GM12878 (cell line): ENCODE measurements at regions of chr10 and their contacts with region 1.

Region 1: GRCh38 chr10:22988581-22989360 is 60.9 kb downstream of the ARMC3 start:
- DNase-seq: peak; percentile 44
- ATAC-seq: peak; percentile 75
- H3K4me3 ChIP-seq: no peak overlapping the region
- H3K27ac ChIP-seq: no peak overlapping the region
- H3K4me1 ChIP-seq: no peaks in the 10 kb centered on the region
- H3K27me3 ChIP-seq: no peaks in the 10 kb centered on the region
- CTCF ChIP-seq: peak; percentile 81 to 87 (median 86)
- EP300 ChIP-seq: no peak
- POLR2A ChIP-seq: no peak
- RAD21 ChIP-seq: peak; percentile 99

Region 2: DNA sequence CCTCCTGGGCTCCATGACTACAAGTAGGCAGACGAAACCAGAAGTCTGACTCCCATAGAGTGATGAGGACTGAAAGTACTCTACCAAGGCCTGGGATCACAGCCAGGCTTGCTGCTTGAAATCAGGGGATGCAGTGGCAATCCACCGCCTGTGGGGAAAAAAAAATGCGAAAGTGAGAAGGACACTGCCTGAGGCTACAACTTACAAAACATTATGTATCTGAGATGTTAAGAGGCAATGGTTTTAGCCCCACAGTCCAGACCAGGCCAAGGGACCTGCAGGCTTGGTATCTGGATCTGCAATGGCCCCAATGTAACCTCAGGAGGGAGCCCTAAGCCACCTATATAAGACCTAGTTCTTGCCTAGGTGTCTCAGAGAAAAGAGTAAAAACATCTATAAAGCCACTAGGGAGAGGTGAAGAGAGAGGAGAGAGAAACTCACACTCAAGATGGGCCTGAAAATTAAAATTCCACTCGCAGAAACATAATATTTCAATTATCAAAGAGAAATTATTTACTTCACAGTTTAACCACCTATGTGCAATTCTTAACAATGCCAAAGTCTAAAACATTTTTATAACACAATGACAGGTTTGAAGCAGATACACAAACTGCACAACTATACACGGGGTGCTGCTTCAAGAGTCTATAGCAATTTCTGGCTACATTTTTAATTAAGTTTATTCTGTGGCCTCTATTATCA is 999.2 kb before region 1 on chr10:
- CTCF ChIA-PET with region 1: interaction called, 72 read pairs
- POLR2A ChIA-PET with region 1: no interaction called
- RAD21 ChIA-PET with region 1: interaction called, 23 read pairs
- SMC1A ChIA-PET with region 1: interaction called, 50 read pairs
- in situ Hi-C with region 1: no loop called
- intact Hi-C with region 1: no loop called
- DNase-seq: no peak
- ATAC-seq: peak; percentile 98
- H3K4me3 ChIP-seq: no peak overlapping the region
- H3K27ac ChIP-seq: no peak overlapping the region
- H3K4me1 ChIP-seq: no peaks in the 10 kb centered on the region
- H3K27me3 ChIP-seq: no peaks in the 10 kb centered on the region
- CTCF ChIP-seq: peak; percentile 65 to 68 (median 65)
- EP300 ChIP-seq: no peak
- POLR2A ChIP-seq: no peak
- RAD21 ChIP-seq: peak; percentile 77

Region 3: GRCh38 chr10:22010973-22011408 is 977.8 kb before region 1 on chr10:
- CTCF ChIA-PET with region 1: interaction called, 35 read pairs
- POLR2A ChIA-PET with region 1: no interaction called
- RAD21 ChIA-PET with region 1: interaction called, 5 read pairs
- SMC1A ChIA-PET with region 1: interaction called, 21 read pairs
- in situ Hi-C with region 1: no loop called
- intact Hi-C with region 1: no loop called
- DNase-seq: no peak
- ATAC-seq: no peak
- H3K4me3 ChIP-seq: no peak overlapping the region
- H3K27ac ChIP-seq: no peak overlapping the region
- H3K4me1 ChIP-seq: no peaks in the 10 kb centered on the region
- H3K27me3 ChIP-seq: no peaks in the 10 kb centered on the region
- CTCF ChIP-seq: no peak; a peak in 1 of 6 replicates
- EP300 ChIP-seq: no peak
- POLR2A ChIP-seq: no peak
- RAD21 ChIP-seq: peak; percentile 4; the same call in 1 of the 2 replicates

Region 4: GRCh38 chr10:22316285-22317120 is 672.3 kb before region 1 on chr10 and contains the start of gene COMMD3:
- CTCF ChIA-PET with region 1: interaction called, 3 read pairs
- POLR2A ChIA-PET with region 1: no interaction called
- RAD21 ChIA-PET with region 1: no interaction called
- SMC1A ChIA-PET with region 1: interaction called, 3 read pairs
- in situ Hi-C with region 1: no loop called
- intact Hi-C with region 1: loop called (anchors 5 kb)
- DNase-seq: peak; percentile 40
- ATAC-seq: peak; percentile 83
- H3K4me3 ChIP-seq: peak within 1 kb of the TSS; percentile 95
- H3K27ac ChIP-seq: peak within 1 kb of the TSS; percentile 89
- H3K4me1 ChIP-seq: peaks cover 18% of the 10 kb centered on the region
- H3K27me3 ChIP-seq: no peaks in the 10 kb centered on the region
- CTCF ChIP-seq: no peak
- EP300 ChIP-seq: no peak
- POLR2A ChIP-seq: peak; percentile 94
- RAD21 ChIP-seq: no peak
- polyA plus RNA-seq, gene COMMD3: 238 to 248 TPM

Region 5: DNA sequence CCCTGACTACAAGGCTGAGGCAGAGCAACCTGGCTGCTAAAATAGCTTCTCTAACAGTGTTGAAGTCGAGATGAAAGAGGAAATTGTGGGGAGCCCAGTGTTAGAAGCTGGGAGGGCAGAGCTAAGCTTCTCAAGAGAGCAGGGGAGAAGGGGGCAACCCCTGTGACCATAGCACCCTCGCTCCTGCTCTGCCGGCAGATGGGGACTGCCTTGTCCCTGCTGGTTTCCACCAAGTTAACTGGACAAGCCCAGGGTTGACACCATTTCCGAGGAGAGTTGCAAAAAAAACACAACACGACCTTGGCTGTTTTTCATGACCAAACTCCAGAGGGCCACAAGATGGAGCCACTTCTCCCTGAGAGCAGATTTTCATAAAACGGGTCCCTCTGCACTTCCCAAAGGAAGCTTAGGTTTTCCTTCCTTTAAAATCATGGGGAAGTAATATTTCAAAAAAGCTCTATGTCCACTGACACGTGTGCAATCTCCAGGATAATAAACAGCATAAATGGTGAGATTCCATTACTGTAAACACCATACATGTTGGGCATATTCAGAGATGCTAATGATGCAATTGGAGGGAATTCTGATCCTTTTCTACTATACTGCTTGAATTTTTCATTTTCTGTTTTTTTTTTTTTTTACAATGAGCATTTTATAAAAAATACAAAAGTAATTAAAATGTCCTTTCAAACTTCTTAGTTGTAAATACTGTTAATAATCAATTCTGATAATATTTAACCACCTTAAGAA is 414.8 kb before region 1 on chr10:
- CTCF ChIA-PET with region 1: interaction called, 48 read pairs
- POLR2A ChIA-PET with region 1: no interaction called
- RAD21 ChIA-PET with region 1: interaction called, 14 read pairs
- SMC1A ChIA-PET with region 1: interaction called, 28 read pairs
- in situ Hi-C with region 1: loop called (anchors 5 kb)
- intact Hi-C with region 1: loop called (anchors 2 kb)
- DNase-seq: no peak
- ATAC-seq: peak; percentile 76
- H3K4me3 ChIP-seq: no peak overlapping the region
- H3K27ac ChIP-seq: 0 out of 2 replicates have a peak overlapping the region, but pooled peaks have one; percentile 49
- H3K4me1 ChIP-seq: 0 out of 2 replicates have a peak, but pooled peaks cover 2% of the 10 kb centered on the region
- H3K27me3 ChIP-seq: no peaks in the 10 kb centered on the region
- CTCF ChIP-seq: peak; percentile 57 to 66 (median 63)
- EP300 ChIP-seq: no peak
- POLR2A ChIP-seq: no peak
- RAD21 ChIP-seq: peak; percentile 84

Region 6: GRCh38 chr10:22714479-22715289 is 274.1 kb before region 1 on chr10 and contains the start of gene PIP4K2A:
- CTCF ChIA-PET with region 1: interaction called, 5 read pairs
- POLR2A ChIA-PET with region 1: no interaction called
- RAD21 ChIA-PET with region 1: no interaction called
- SMC1A ChIA-PET with region 1: interaction called, 3 read pairs
- in situ Hi-C with region 1: no loop called
- intact Hi-C with region 1: loop called (anchors 5 kb)
- DNase-seq: no peak
- ATAC-seq: peak; percentile 63
- H3K4me3 ChIP-seq: peak within 1 kb of the TSS; percentile 75
- H3K27ac ChIP-seq: peak within 1 kb of the TSS; percentile 81
- H3K4me1 ChIP-seq: peaks cover 7% of the 10 kb centered on the region
- H3K27me3 ChIP-seq: no peaks in the 10 kb centered on the region
- CTCF ChIP-seq: no peak
- EP300 ChIP-seq: no peak
- POLR2A ChIP-seq: peak; percentile 84
- RAD21 ChIP-seq: no peak
- polyA plus RNA-seq, gene PIP4K2A: 54.3 to 103 TPM

Region 7: GRCh38 chr10:22825853-22826346 is 162.9 kb before region 1 on chr10:
- CTCF ChIA-PET with region 1: no interaction called
- POLR2A ChIA-PET with region 1: no interaction called
- RAD21 ChIA-PET with region 1: no interaction called
- SMC1A ChIA-PET with region 1: no interaction called
- in situ Hi-C with region 1: no loop called
- intact Hi-C with region 1: no loop called
- DNase-seq: no peak
- ATAC-seq: peak; percentile 31; the same call in 2 of the 3 replicates
- H3K4me3 ChIP-seq: no peak overlapping the region
- H3K27ac ChIP-seq: no peak overlapping the region
- H3K4me1 ChIP-seq: no peaks in the 10 kb centered on the region
- H3K27me3 ChIP-seq: no peaks in the 10 kb centered on the region
- CTCF ChIP-seq: no peak
- EP300 ChIP-seq: no peak
- POLR2A ChIP-seq: no peak
- RAD21 ChIP-seq: no peak